Dendritic cell treated with granulocyte-macrophage colony-stimulating factor and Interleukin-4, amounts not matched to agents 40 ng/mL and 50 ng/mL, for 4 days (primary cell): ENCODE measurements at regions of chr7 and their contacts with region 1.

Region 1: GRCh38 chr7:102444961-102445673 is 11.7 kb downstream of the ORAI2 start:
- H3K4me3 Mint-ChIP-seq: no peak overlapping the region
- H3K27ac Mint-ChIP-seq: peak overlapping the region; percentile 21
- H3K4me1 Mint-ChIP-seq: no peaks in the 10 kb centered on the region
- H3K27me3 Mint-ChIP-seq: no peaks in the 10 kb centered on the region

Region 2: GRCh38 chr7:102412548-102412947 is 32.6 kb before region 1 on chr7:
- intact Hi-C with region 1: loop called (anchors 5 kb)
- H3K4me3 Mint-ChIP-seq: no peak overlapping the region
- H3K27ac Mint-ChIP-seq: no peak overlapping the region
- H3K4me1 Mint-ChIP-seq: peaks cover 19% of the 10 kb centered on the region
- H3K27me3 Mint-ChIP-seq: no peaks in the 10 kb centered on the region

Region 3: DNA sequence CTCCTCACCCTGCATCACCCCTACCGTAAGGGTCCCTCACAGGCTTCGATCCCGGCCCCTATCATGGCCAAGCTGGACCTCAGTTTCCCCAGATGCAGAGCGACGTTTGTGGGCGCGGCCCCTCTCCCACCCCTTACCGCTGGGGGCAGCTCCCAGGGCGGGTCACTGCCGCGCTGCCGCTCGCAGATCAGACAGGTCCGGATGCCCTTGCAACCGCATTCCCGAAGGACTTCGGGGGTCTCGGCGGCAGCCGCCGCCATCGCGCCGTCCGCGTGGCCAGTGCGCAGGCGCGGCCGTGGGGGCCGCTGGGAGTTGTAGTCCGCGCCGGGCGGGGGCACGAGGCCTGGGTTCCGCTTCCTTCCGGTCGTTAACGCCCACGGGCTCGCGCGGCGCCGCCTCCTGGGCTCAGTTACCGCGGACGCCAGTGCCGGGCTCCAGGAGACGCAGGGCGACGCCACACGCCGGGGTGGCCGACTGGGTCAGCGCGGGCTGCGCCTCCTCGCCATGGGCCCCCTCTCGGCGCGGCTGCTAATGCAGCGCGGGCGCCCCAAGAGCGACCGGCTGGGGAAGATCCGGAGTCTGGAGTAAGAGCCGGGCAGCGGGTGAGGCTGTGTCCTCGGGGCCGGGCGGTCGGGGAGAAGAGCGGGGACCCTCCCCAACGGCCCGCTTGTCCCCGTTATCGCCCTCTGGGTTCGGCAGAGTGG is 19.6 kb after region 1 on chr7 and contains the starts of genes ALKBH4 and LRWD1:
- intact Hi-C with region 1: no loop called
- H3K4me3 Mint-ChIP-seq: peak within 1 kb of the TSS; percentile 94
- H3K27ac Mint-ChIP-seq: peak within 1 kb of the TSS; percentile 91
- H3K4me1 Mint-ChIP-seq: peaks cover 40% of the 10 kb centered on the region
- H3K27me3 Mint-ChIP-seq: peaks cover 6% of the 10 kb centered on the region

Region 4: GRCh38 chr7:103031781-103032180 is 586.7 kb after region 1 on chr7:
- intact Hi-C with region 1: no loop called
- H3K4me3 Mint-ChIP-seq: no peak overlapping the region
- H3K27ac Mint-ChIP-seq: no peak overlapping the region
- H3K4me1 Mint-ChIP-seq: no peaks in the 10 kb centered on the region
- H3K27me3 Mint-ChIP-seq: no peaks in the 10 kb centered on the region